Naive thymus-derived CD4-positive, alpha-beta T cell (primary cell): ENCODE measurements at regions of chr13 and their contacts with region 1.

Region 1: GRCh38 chr13:46211483-46212351 is at the start of gene LRRC63:
- DNase-seq: peak; percentile 69 to 88 (median 80)
- ATAC-seq: peak; percentile 98
- H3K4me3 ChIP-seq: peak within 1 kb of the TSS; percentile 81
- H3K4me3 Mint-ChIP-seq: peak within 1 kb of the TSS; percentile 83 to 100 (median 93)
- H3K27ac ChIP-seq: peak within 1 kb of the TSS; percentile 88
- H3K27ac Mint-ChIP-seq: peak within 1 kb of the TSS; percentile 91 to 98 (median 94)
- H3K4me1 ChIP-seq: peaks cover 5 to 8% of the 10 kb centered on the region in 2 donors
- H3K4me1 Mint-ChIP-seq: peaks cover 7 to 37% (median 26%) of the 10 kb centered on the region in 7 donors
- H3K27me3 ChIP-seq: no peaks in the 10 kb centered on the region
- H3K27me3 Mint-ChIP-seq: peaks cover 0 to 6% (median 0%) of the 10 kb centered on the region in 5 donors
- total RNA-seq, gene LRRC63: 0.19 to 0.80 (median 0.49) TPM

Region 2: GRCh38 chr13:46071590-46072249 is 140.0 kb before region 1 on chr13:
- CTCF ChIA-PET with region 1: no interaction called
- POLR2A ChIA-PET with region 1: no interaction called
- intact Hi-C with region 1: no loop called
- DNase-seq: no peak
- ATAC-seq: no peak
- H3K4me3 ChIP-seq: no peak overlapping the region
- H3K4me3 Mint-ChIP-seq: no peak overlapping the region
- H3K27ac ChIP-seq: no peak overlapping the region
- H3K27ac Mint-ChIP-seq: no peak overlapping the region
- H3K4me1 ChIP-seq: no peaks in the 10 kb centered on the region
- H3K4me1 Mint-ChIP-seq: peaks cover 0 to 7% (median 0%) of the 10 kb centered on the region in 7 donors
- H3K27me3 ChIP-seq: no peaks in the 10 kb centered on the region
- H3K27me3 Mint-ChIP-seq: peaks cover 0 to 25% (median 4%) of the 10 kb centered on the region in 5 donors

Region 3: GRCh38 chr13:46288570-46289259 is 77.0 kb after region 1 on chr13:
- CTCF ChIA-PET with region 1: interaction called, 4 read pairs
- POLR2A ChIA-PET with region 1: no interaction called
- intact Hi-C with region 1: loop called in 1 of 2 experiments (anchors 5 kb)
- DNase-seq: peak in 7 of 9 donors; percentile 46 to 75 (median 70)
- ATAC-seq: peak; percentile 84
- H3K4me3 ChIP-seq: no peak overlapping the region
- H3K4me3 Mint-ChIP-seq: no peak overlapping the region
- H3K27ac ChIP-seq: no peak overlapping the region
- H3K27ac Mint-ChIP-seq: peak overlapping the region in 3 of 9 donors; percentile 8 to 18 (median 16)
- H3K4me1 ChIP-seq: peaks cover 0 to 17% of the 10 kb centered on the region in 2 donors
- H3K4me1 Mint-ChIP-seq: peaks cover 4 to 29% (median 15%) of the 10 kb centered on the region in 7 donors
- H3K27me3 ChIP-seq: no peaks in the 10 kb centered on the region
- H3K27me3 Mint-ChIP-seq: no peaks in the 10 kb centered on the region